Activated B cell treated with CpG ODN at 0.5 μM for 24 hours (primary cell): ENCODE measurements at regions of chr17 and their contacts with region 1.

Region 1: GRCh38 chr17:76868176-76868668 is at the start of gene MGAT5B:
- DNase-seq: peak; percentile 88
- ATAC-seq: peak; percentile 93
- H3K4me3 Mint-ChIP-seq: peak within 1 kb of the TSS; percentile 67
- H3K27ac Mint-ChIP-seq: no peak within 1 kb of the TSS
- H3K4me1 Mint-ChIP-seq: peaks cover 10% of the 10 kb centered on the region
- H3K27me3 Mint-ChIP-seq: peaks cover 38% of the 10 kb centered on the region
- CTCF ChIP-seq: no peak
- total RNA-seq, gene MGAT5B: 5.6 and 7.4 TPM in 2 replicates

Region 2: DNA sequence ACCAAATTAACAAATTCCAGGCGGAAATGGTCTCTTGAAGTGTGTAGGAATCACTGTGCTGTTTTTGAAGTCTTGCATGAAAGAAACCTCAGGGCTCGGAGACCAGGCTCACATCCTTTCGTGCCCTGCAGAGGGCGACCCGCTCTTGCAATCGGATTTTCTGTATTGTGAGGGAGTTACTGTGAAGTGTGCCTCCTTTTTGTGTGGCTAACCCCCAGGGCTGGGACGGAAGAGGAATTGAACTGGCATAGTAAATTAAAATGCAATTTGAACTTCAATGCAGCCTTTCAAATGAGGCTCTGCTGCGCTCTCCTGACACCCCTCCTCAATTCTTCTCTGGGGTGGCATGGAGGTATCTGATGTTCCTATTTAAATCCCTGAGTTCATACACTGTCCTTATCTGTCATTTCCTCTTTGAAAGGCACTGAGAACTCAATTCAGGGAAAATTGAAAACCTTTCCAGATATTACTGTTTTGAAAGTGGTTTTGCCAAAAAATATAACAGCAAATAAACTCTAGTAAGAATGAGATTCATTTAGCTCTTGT is 51.6 kb before region 1 on chr17:
- CTCF ChIA-PET with region 1: no interaction called
- POLR2A ChIA-PET with region 1: no interaction called
- intact Hi-C with region 1: loop called (anchors 1 kb)
- DNase-seq: no peak
- ATAC-seq: peak; percentile 57
- H3K4me3 Mint-ChIP-seq: no peak overlapping the region
- H3K27ac Mint-ChIP-seq: no peak overlapping the region
- H3K4me1 Mint-ChIP-seq: peaks cover 7% of the 10 kb centered on the region
- H3K27me3 Mint-ChIP-seq: peaks cover 11% of the 10 kb centered on the region
- CTCF ChIP-seq: no peak

Region 3: GRCh38 chr17:76997981-76998531 is 129.8 kb after region 1 on chr17:
- CTCF ChIA-PET with region 1: interaction called, 4 read pairs
- POLR2A ChIA-PET with region 1: no interaction called
- intact Hi-C with region 1: loop called (anchors 5 kb)
- DNase-seq: peak; percentile 40
- ATAC-seq: peak; percentile 90
- H3K4me3 Mint-ChIP-seq: peak overlapping the region; percentile 68
- H3K27ac Mint-ChIP-seq: peak overlapping the region; percentile 74
- H3K4me1 Mint-ChIP-seq: peaks cover 40% of the 10 kb centered on the region
- H3K27me3 Mint-ChIP-seq: peaks cover 15% of the 10 kb centered on the region
- CTCF ChIP-seq: no peak

Region 4: GRCh38 chr17:77061669-77062068 is 193.4 kb after region 1 on chr17:
- CTCF ChIA-PET with region 1: interaction called, 109 read pairs
- POLR2A ChIA-PET with region 1: interaction called, 21 read pairs
- intact Hi-C with region 1: loop called (anchors 1 kb)
- DNase-seq: no peak
- ATAC-seq: no peak
- H3K4me3 Mint-ChIP-seq: no peak overlapping the region
- H3K27ac Mint-ChIP-seq: no peak overlapping the region
- H3K4me1 Mint-ChIP-seq: peaks cover under 1% of the 10 kb centered on the region
- H3K27me3 Mint-ChIP-seq: peaks cover 10% of the 10 kb centered on the region
- CTCF ChIP-seq: no peak

Region 5: DNA sequence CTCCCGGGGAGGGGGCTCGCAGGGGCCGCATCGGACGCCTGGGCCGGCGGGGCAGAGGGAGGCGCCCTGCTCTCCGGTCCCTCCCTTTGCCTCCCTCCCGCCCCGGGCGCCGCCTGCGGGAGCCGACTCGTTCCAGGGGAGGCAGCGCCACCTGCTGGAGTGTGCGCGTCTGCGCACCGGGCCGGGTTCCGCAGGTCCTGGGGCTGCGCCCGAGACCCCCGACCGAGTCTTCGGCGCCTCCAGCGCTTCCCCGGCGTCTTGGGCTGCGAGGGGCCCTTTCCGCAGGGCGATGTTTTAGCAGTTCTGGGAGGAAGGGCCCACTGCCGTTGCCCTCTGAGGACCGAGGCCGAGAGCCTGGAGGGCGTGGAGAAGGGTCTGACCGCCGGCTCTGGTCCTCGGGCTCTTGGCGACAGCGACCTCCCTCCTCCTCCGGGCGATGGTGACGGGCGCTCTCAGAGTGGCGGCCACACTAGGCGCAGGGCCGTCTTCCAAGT is 378.9 kb after region 1 on chr17:
- CTCF ChIA-PET with region 1: interaction called, 3 read pairs
- POLR2A ChIA-PET with region 1: no interaction called
- intact Hi-C with region 1: loop called (anchors 1 kb)
- DNase-seq: peak; percentile 89
- ATAC-seq: peak; percentile 99
- H3K4me3 Mint-ChIP-seq: peak overlapping the region; percentile 55
- H3K27ac Mint-ChIP-seq: no peak overlapping the region
- H3K4me1 Mint-ChIP-seq: peaks cover 14% of the 10 kb centered on the region
- H3K27me3 Mint-ChIP-seq: peaks cover 28% of the 10 kb centered on the region
- CTCF ChIP-seq: peak; percentile 68